ENCODE measurements at regions of chr14 and their contacts with region 1.

Region 1: DNA sequence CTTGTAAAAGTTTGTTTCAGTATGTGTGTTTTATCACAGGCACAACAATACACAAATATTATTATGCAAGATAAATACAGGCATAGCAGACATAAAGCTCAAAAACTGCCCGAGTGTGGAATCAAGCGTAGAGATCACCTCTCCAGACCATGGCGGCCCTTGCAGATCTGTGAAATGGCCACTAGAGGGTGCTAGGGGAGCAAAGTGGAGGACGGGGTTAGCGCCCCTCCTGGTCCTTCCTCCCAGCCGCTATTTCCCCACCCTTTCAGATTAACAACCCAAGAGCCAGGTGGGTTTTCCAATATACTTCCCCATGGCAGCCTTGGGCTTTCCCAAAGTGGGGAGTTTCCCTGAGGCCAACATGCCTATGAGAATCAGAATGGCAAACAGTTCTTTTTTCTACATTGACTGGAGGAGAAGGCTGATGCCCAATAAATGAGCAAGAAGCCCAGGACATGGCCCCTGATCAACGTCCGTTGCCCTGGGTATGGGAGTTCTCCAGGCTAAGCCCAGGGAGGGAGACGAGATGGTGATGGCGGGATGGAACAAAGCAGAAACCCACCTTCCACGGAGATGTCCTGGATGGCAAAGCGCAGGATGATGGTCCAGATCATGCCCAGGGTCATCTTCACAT is 67.4 kb downstream of the ACTN1 start:
- DNase-seq: peak; percentile 83
- H3K4me3 Mint-ChIP-seq: no peak overlapping the region
- H3K27ac Mint-ChIP-seq: peak overlapping the region; percentile 77
- H3K4me1 Mint-ChIP-seq: peaks cover 5% of the 10 kb centered on the region
- H3K27me3 Mint-ChIP-seq: no peaks in the 10 kb centered on the region
- CTCF ChIP-seq: peak; percentile 93

Region 2: DNA sequence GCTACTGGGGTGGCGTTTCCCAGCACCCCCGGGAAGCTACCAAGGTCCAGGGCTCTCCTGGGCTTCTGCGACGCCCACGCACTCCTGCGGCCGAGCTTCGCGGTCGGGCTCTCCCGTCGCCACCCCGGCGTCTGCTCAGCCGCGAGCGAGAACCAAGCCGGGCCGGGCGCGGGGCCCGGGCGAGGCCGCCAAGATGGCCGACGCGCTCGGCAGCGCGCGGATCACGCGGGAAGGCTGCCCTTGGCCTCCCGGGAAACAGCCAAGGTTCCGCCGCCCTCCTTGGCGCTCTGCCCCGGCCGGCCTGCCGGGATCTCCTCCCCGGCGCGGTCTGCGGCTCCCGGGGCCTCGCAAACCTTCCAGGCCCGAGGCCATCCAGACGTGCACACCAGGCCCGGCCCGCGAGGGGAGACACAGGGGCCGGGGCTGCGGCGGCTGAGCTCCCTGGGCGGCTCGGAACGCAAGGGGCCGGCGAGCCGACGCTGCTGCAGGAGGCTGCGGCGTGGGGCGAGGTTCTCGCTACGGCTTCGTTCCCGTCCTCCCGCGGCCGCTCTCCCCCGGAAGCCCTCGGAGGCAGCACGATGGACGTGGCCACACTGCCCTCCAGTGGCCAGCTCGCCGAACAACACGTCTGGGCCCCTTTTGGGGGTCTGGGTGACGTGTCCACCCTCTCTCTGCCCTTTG is 95.3 kb before region 1 on chr14:
- CTCF ChIA-PET with region 1: no interaction called
- POLR2A ChIA-PET with region 1: no interaction called
- intact Hi-C with region 1: no loop called
- DNase-seq: peak; percentile 85
- H3K4me3 Mint-ChIP-seq: peak overlapping the region; percentile 49
- H3K27ac Mint-ChIP-seq: peak overlapping the region; percentile 88
- H3K4me1 Mint-ChIP-seq: peaks cover 20% of the 10 kb centered on the region
- H3K27me3 Mint-ChIP-seq: no peaks in the 10 kb centered on the region
- CTCF ChIP-seq: peak; percentile 98

Region 3: DNA sequence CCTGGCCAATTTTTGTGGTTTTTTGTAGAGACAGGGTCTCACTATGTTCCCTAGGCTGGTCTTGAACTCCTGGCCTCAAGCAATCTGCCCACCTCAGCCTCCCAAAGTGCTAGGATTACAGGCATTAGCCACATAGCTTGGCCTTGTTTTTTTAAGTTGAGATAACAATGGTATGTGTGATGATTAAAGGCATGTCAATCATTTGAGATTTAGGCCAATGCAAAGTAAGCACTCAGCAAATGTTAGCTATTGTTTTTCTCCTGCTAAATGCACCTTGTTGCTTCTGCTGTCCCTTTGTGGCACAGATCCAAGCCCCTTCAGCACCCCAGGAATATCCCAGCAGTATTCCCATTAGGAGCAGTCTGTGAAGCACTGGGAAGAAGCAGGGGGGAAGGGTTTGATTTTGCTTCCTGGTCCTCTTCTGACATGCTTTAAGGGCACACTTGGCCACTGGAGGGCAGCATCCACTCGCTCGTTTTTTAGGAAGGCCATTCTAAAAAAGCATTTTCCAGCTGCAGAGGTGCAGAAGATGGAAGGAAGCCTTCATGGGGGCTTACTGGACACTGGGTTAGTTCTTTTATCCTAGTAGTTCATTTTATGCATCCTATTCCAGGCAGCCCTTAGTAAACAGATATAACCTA is 48.6 kb before region 1 on chr14:
- CTCF ChIA-PET with region 1: interaction called, 14 read pairs
- POLR2A ChIA-PET with region 1: no interaction called
- intact Hi-C with region 1: no loop called
- DNase-seq: peak; percentile 85
- H3K4me3 Mint-ChIP-seq: no peak overlapping the region
- H3K27ac Mint-ChIP-seq: no peak overlapping the region
- H3K4me1 Mint-ChIP-seq: no peaks in the 10 kb centered on the region
- H3K27me3 Mint-ChIP-seq: no peaks in the 10 kb centered on the region
- CTCF ChIP-seq: peak; percentile 71

Region 4: GRCh38 chr14:68926236-68926635 is 14.5 kb after region 1 on chr14:
- CTCF ChIA-PET with region 1: interaction called, 19 read pairs
- POLR2A ChIA-PET with region 1: interaction called, 5 read pairs
- intact Hi-C with region 1: no loop called
- DNase-seq: no peak
- H3K4me3 Mint-ChIP-seq: no peak overlapping the region
- H3K27ac Mint-ChIP-seq: peak overlapping the region; percentile 65
- H3K4me1 Mint-ChIP-seq: peaks cover 18% of the 10 kb centered on the region
- H3K27me3 Mint-ChIP-seq: no peaks in the 10 kb centered on the region
- CTCF ChIP-seq: peak; percentile 19

Region 5: DNA sequence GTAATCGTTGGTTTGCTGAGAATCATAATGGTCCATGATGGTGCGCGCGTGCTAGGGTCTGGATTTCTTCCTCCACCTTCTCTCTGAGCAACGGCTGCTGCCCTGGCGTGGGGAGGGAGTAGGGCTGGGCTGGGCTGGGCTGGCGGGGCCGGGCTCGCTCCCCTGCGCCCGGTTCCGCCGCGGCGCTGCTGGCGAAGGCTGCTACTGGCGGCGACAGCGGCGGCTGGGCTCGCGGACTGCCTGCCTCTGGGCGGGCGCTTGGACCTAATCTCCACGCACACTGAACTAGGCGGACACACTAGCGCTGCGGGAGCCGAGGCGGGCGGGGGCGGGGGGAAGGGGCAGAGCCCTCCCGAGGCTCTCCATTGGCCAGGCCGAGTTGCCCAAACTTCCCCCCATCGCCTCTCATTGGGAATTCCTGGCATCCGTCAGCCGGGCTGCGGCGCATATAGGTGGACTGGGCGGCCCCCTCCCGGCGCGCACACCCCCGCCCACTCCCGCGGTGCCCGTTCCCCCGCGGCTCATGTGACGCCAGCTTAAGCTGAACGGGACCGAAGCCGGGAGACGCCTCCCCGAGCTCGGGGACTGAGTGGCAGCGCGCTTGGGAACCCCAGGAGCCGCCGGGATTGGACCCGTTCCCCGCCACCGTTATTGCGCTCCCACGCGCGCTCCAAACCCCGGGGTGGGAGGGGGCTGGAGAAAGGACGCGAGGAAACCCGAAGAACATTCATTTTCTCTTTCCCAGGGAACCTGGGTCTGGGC is 67.5 kb after region 1 on chr14 and contains the start of gene ACTN1:
- CTCF ChIA-PET with region 1: interaction called, 15 read pairs
- POLR2A ChIA-PET with region 1: interaction called, 6 read pairs
- intact Hi-C with region 1: loop called (anchors 1 kb)
- DNase-seq: peak; percentile 98
- H3K4me3 Mint-ChIP-seq: peak within 1 kb of the TSS; percentile 78
- H3K27ac Mint-ChIP-seq: peak within 1 kb of the TSS; percentile 95
- H3K4me1 Mint-ChIP-seq: peaks cover 56% of the 10 kb centered on the region
- H3K27me3 Mint-ChIP-seq: no peaks in the 10 kb centered on the region
- CTCF ChIP-seq: no peak
- total RNA-seq, gene ACTN1: 239 and 312 TPM in 2 replicates

Region 6: GRCh38 chr14:69101331-69101826 is 189.7 kb after region 1 on chr14:
- CTCF ChIA-PET with region 1: interaction called, 53 read pairs
- POLR2A ChIA-PET with region 1: interaction called, 3 read pairs
- intact Hi-C with region 1: loop called (anchors 1 kb)
- DNase-seq: peak; percentile 87
- H3K4me3 Mint-ChIP-seq: no peak overlapping the region
- H3K27ac Mint-ChIP-seq: peak overlapping the region; percentile 64
- H3K4me1 Mint-ChIP-seq: peaks cover 12% of the 10 kb centered on the region
- H3K27me3 Mint-ChIP-seq: no peaks in the 10 kb centered on the region
- CTCF ChIP-seq: peak; percentile 48

Region 7: GRCh38 chr14:69953266-69953915 is 1041.7 kb after region 1 on chr14:
- CTCF ChIA-PET with region 1: no interaction called
- POLR2A ChIA-PET with region 1: no interaction called
- intact Hi-C with region 1: no loop called
- DNase-seq: no peak
- H3K4me3 Mint-ChIP-seq: no peak overlapping the region
- H3K27ac Mint-ChIP-seq: peak overlapping the region; percentile 52
- H3K4me1 Mint-ChIP-seq: no peaks in the 10 kb centered on the region
- H3K27me3 Mint-ChIP-seq: no peaks in the 10 kb centered on the region
- CTCF ChIP-seq: no peak